Activated CD8-positive, alpha-beta T cell treated with anti-CD3 and anti-CD28 coated beads, Interleukin-2, amount 10 ng/mL, durations not matched to agents 7 days and 5 days (primary cell): ENCODE measurements at regions of chr15 and their contacts with region 1.

Region 1: GRCh38 chr15:44066316-44066740 is 128.7 kb downstream of the FRMD5 start:
- DNase-seq: peak; percentile 79
- ATAC-seq: peak; percentile 44
- H3K4me3 Mint-ChIP-seq: no peak overlapping the region
- H3K27ac Mint-ChIP-seq: no peak overlapping the region
- H3K4me1 Mint-ChIP-seq: no peaks in the 10 kb centered on the region
- H3K27me3 Mint-ChIP-seq: peaks cover 26% of the 10 kb centered on the region

Region 2: DNA sequence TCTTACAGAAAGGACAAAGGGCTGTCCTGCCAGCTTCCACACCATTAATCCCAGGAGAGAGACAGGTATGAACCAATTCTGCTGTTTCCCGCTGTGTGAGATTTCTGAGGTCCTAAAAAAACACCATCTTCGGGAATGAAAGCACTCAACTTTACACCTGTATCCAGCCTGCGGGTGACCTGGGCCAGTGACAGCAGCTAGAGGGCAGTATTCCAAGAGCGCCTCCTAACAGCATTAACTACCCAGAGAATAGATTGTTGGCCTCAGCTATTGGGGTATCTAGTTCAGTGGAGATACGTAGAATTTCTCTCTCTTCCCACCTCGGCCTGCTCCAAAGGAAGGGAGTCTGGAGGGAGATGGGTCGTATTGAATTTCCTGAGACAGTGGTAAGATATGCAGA is 184.4 kb before region 1 on chr15:
- CTCF ChIA-PET with region 1: interaction called, 10 read pairs
- POLR2A ChIA-PET with region 1: no interaction called
- DNase-seq: no peak
- ATAC-seq: no peak
- H3K4me3 Mint-ChIP-seq: no peak overlapping the region
- H3K27ac Mint-ChIP-seq: no peak overlapping the region
- H3K4me1 Mint-ChIP-seq: no peaks in the 10 kb centered on the region
- H3K27me3 Mint-ChIP-seq: no peaks in the 10 kb centered on the region

Region 3: DNA sequence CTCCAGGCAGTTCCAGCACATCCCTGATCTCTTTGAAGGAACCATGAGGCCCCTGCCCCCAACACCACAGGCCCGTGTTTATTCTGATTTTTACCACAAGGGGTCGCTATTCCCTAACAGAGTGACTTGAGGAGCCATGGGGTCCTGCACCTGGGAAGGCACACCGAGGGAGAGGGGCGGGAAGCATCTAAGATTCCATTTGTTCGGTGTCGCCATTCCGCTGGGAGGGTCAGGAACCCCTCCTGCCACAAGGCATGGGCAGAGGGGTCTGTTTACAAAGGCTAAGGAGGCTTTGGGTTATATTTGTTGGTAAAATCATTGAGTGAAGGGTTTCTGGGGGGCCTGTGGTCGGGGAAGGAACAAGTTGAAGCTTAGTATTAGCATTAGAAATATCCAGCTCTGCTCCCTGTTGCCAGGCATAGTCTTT is 162.5 kb before region 1 on chr15:
- CTCF ChIA-PET with region 1: interaction called, 72 read pairs
- POLR2A ChIA-PET with region 1: no interaction called
- DNase-seq: peak; percentile 70
- ATAC-seq: peak; percentile 79
- H3K4me3 Mint-ChIP-seq: no peak overlapping the region
- H3K27ac Mint-ChIP-seq: peak overlapping the region; percentile 56
- H3K4me1 Mint-ChIP-seq: peaks cover 4% of the 10 kb centered on the region
- H3K27me3 Mint-ChIP-seq: no peaks in the 10 kb centered on the region

Region 4: DNA sequence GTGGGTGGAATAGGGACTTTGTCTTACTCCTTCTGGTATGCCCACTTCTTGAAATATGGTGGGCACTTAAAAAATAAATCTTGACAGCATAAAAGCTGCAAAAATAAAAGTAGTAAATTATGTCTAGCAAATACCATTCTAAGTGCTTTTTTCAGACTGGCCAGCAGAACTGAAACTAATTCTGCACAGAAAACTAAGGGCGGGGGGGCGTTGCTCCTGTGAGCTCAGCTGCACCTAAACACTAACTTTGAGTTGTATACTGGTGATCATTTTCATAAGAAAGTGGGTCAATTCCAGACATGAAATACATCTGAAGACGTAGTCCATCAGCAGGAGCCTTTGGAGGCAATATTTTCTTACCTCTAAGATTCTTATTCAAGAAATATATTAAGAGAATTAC is 124.8 kb before region 1 on chr15:
- CTCF ChIA-PET with region 1: interaction called, 11 read pairs
- POLR2A ChIA-PET with region 1: no interaction called
- DNase-seq: no peak
- ATAC-seq: no peak
- H3K4me3 Mint-ChIP-seq: no peak overlapping the region
- H3K27ac Mint-ChIP-seq: no peak overlapping the region
- H3K4me1 Mint-ChIP-seq: no peaks in the 10 kb centered on the region
- H3K27me3 Mint-ChIP-seq: peaks cover 17% of the 10 kb centered on the region

Region 5: DNA sequence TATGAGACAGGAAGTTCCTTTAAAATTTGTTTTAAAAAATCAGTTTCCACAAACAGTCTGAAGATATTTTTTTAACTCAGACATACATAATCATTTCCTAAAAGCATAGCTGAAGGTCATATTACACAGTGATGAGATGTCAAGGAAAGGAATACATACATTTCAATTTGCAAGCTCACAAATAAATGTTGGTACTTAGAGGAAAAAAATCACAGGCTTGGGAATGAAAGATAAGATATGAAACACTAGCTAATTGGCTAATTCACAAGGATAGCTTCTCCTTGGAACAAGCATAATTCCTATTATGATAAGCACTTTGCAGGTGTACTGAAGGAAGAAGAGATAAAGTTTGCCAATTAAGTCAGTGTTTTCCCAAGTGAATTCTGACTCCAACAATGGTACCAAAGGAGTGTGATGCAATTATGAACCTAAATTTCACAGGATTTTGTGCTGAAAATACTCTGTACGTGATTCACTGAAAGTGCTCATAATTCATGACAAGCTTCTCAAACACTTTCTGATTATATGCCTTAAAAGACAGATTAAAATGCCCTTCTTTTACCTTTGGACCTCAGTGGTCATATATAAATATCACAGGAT is 16.3 kb after region 1 on chr15:
- CTCF ChIA-PET with region 1: interaction called, 10 read pairs
- POLR2A ChIA-PET with region 1: no interaction called
- DNase-seq: no peak
- ATAC-seq: no peak
- H3K4me3 Mint-ChIP-seq: no peak overlapping the region
- H3K27ac Mint-ChIP-seq: no peak overlapping the region
- H3K4me1 Mint-ChIP-seq: no peaks in the 10 kb centered on the region
- H3K27me3 Mint-ChIP-seq: peaks cover 42% of the 10 kb centered on the region

Region 6: GRCh38 chr15:44222478-44222877 is 156.2 kb after region 1 on chr15:
- CTCF ChIA-PET with region 1: no interaction called
- POLR2A ChIA-PET with region 1: no interaction called
- DNase-seq: no peak
- ATAC-seq: no peak
- H3K4me3 Mint-ChIP-seq: no peak overlapping the region
- H3K27ac Mint-ChIP-seq: no peak overlapping the region
- H3K4me1 Mint-ChIP-seq: no peaks in the 10 kb centered on the region
- H3K27me3 Mint-ChIP-seq: peaks cover 37% of the 10 kb centered on the region

Region 7: GRCh38 chr15:44286814-44287452 is 220.6 kb after region 1 on chr15:
- CTCF ChIA-PET with region 1: no interaction called
- POLR2A ChIA-PET with region 1: no interaction called
- DNase-seq: no peak
- ATAC-seq: no peak
- H3K4me3 Mint-ChIP-seq: peak overlapping the region; percentile 88
- H3K27ac Mint-ChIP-seq: peak overlapping the region; percentile 93
- H3K4me1 Mint-ChIP-seq: peaks cover 35% of the 10 kb centered on the region
- H3K27me3 Mint-ChIP-seq: peaks cover 8% of the 10 kb centered on the region